CD14-positive monocyte (primary cell): ENCODE measurements at regions of chr11 and their contacts with region 1.

Region 1: DNA sequence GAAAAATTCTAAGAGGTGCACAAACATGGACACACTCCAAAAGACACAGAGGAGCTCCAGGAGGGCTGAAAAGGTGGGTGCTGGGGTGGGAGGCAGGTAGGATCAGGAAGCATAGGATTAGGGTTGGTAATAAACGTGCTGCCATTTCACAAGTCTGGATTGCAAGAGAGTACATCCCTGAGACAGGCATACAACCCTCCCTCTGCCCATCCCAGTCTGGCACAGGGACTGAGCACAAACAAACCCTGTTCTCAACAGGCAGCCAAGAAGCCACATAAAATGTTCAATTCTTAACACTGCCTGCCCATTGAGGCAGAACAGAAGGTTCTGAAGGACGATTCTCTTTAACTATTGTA is 18.5 kb downstream of the SLC35F2 start:
- DNase-seq: peak in 1 of 3 donors; percentile 26
- H3K4me3 ChIP-seq: peak overlapping the region in 1 of 3 experiments; percentile 53
- H3K4me3 Mint-ChIP-seq: peak overlapping the region; percentile 13 to 88
- H3K27ac ChIP-seq: peak overlapping the region; percentile 79 to 91
- H3K27ac Mint-ChIP-seq: peak overlapping the region; percentile 89 to 97 (median 93)
- H3K4me1 ChIP-seq: peaks cover 28 to 31% of the 10 kb centered on the region in 2 donors
- H3K4me1 Mint-ChIP-seq: peaks cover 31% of the 10 kb centered on the region
- H3K27me3 ChIP-seq: no peaks in the 10 kb centered on the region
- H3K27me3 Mint-ChIP-seq: peaks cover 0 to 5% (median 2%) of the 10 kb centered on the region in 3 donors
- CTCF ChIP-seq: no peak

Region 2: DNA sequence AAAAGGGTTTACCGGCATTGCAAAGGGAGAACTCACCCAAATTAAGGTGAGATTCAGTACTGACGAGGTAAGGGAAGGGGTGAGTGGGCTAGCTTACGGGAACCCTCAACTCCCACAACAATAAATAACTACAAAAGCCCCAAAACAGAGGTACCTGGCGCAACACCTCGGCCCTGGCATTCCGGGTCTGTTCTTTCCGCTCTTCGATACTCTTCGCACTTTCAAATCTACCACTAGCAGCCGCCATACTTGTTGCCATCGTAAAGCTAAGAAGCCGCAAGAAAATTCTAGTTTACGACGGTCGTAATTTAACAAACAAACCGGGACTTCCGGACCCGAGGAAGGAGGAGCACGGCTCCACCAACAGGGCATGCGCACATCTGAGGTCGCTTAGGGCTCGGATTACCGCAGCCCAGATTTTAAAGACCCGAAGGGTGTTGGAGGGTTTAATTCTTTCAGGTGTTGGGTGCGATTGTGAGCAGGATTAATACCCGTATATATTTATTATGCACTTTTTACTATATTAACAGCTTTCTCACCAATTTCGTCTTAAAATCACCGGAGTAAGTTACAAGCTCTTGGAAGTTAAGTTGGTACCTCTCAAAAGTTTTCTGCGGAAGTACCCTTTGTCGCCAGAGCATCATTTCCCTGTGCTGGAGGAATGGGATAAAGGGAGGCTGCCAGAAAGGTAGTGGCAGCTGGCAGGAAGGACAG is 382.4 kb before region 1 on chr11 and contains the start of gene CWF19L2:
- intact Hi-C with region 1: loop called in 1 of 2 experiments (anchors 10 kb)
- DNase-seq: peak; percentile 87 to 93 (median 88)
- H3K4me3 ChIP-seq: peak within 1 kb of the TSS; percentile 80 to 99 (median 84)
- H3K4me3 Mint-ChIP-seq: peak within 1 kb of the TSS; percentile 84 to 97
- H3K27ac ChIP-seq: peak within 1 kb of the TSS; percentile 20 to 81
- H3K27ac Mint-ChIP-seq: peak within 1 kb of the TSS; percentile 83 to 90 (median 89)
- H3K4me1 ChIP-seq: peaks cover 12 to 14% of the 10 kb centered on the region in 2 donors
- H3K4me1 Mint-ChIP-seq: peaks cover 14% of the 10 kb centered on the region
- H3K27me3 ChIP-seq: peaks cover 6 to 13% of the 10 kb centered on the region in 2 donors
- H3K27me3 Mint-ChIP-seq: peaks cover 0 to 21% (median 9%) of the 10 kb centered on the region in 3 donors
- CTCF ChIP-seq: no peak
- polyA plus RNA-seq, gene CWF19L2: 1.6 to 2.2 (median 1.7) TPM

Region 3: GRCh38 chr11:107808521-107808920 is 31.6 kb before region 1 on chr11:
- intact Hi-C with region 1: loop called in 1 of 2 experiments (anchors 5 kb)
- DNase-seq: no peak
- H3K4me3 ChIP-seq: no peak overlapping the region
- H3K4me3 Mint-ChIP-seq: peak overlapping the region in 1 of 2 donors; percentile 17
- H3K27ac ChIP-seq: no peak overlapping the region
- H3K27ac Mint-ChIP-seq: no peak overlapping the region
- H3K4me1 ChIP-seq: peaks cover 7 to 18% of the 10 kb centered on the region in 2 donors
- H3K4me1 Mint-ChIP-seq: peaks cover 20% of the 10 kb centered on the region
- H3K27me3 ChIP-seq: peaks cover 8 to 17% of the 10 kb centered on the region in 2 donors
- H3K27me3 Mint-ChIP-seq: peaks cover 16 to 30% (median 30%) of the 10 kb centered on the region in 3 donors
- CTCF ChIP-seq: no peak

Region 4: GRCh38 chr11:107928046-107928766 is 88.1 kb after region 1 on chr11 and contains the start of gene RAB39A:
- intact Hi-C with region 1: loop called in 1 of 2 experiments (anchors 10 kb)
- DNase-seq: peak; percentile 96 to 99 (median 98)
- H3K4me3 ChIP-seq: peak within 1 kb of the TSS; percentile 88 to 96 (median 91)
- H3K4me3 Mint-ChIP-seq: peak within 1 kb of the TSS; percentile 96 to 97
- H3K27ac ChIP-seq: peak within 1 kb of the TSS; percentile 83 to 87
- H3K27ac Mint-ChIP-seq: peak within 1 kb of the TSS; percentile 87 to 97 (median 92)
- H3K4me1 ChIP-seq: peaks cover 22 to 31% of the 10 kb centered on the region in 2 donors
- H3K4me1 Mint-ChIP-seq: peaks cover 33% of the 10 kb centered on the region
- H3K27me3 ChIP-seq: no peaks in the 10 kb centered on the region
- H3K27me3 Mint-ChIP-seq: peaks cover 0 to 14% (median 7%) of the 10 kb centered on the region in 3 donors
- CTCF ChIP-seq: no peak
- polyA plus RNA-seq, gene RAB39A: 1.9 to 6.3 (median 3.9) TPM